Left ventricle myocardium superior (tissue), 1 donor: ENCODE measurements at regions of chr12 and their contacts with region 1.

Region 1: GRCh38 chr12:7995266-7995963 is 37.1 kb upstream of the FOXJ2 start:
- DNase-seq: peak; percentile 72
- ATAC-seq: peak; percentile 99

Region 2: GRCh38 chr12:7859552-7859951 is 135.9 kb before region 1 on chr12:
- intact Hi-C with region 1: loop called (anchors 5 kb)
- DNase-seq: no peak
- ATAC-seq: no peak

Region 3: GRCh38 chr12:7933255-7933729 is 62.1 kb before region 1 on chr12:
- intact Hi-C with region 1: loop called (anchors 10 kb)
- DNase-seq: peak; percentile 71
- ATAC-seq: peak; percentile 90